HEK293 (cell line): ENCODE measurements at regions of chr7 and their contacts with region 1.

Region 1: DNA sequence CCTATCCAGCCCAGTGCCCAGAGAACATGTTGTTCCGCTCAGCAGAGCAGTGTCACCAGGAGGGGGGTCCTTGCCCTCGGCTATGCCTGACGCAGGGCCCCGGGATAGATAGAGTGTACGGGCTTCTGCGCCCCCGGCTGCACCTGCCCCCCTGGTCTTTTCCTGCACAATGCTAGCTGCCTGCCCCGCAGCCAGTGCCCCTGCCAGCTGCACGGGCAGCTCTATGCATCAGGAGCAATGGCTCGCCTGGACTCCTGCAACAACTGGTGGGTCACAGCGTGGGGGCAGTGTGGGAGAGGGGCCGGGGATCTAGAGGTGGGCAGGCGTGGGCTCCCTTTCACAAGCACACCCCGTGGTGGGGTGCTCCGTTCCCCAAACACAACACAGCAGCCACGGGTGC is 31.4 kb upstream of the ZNF862 start:
- H3K4me3 ChIP-seq: no peak overlapping the region
- H3K27ac ChIP-seq: no peak overlapping the region
- H3K4me1 ChIP-seq: no peaks in the 10 kb centered on the region
- CTCF ChIP-seq: no peak

Region 2: DNA sequence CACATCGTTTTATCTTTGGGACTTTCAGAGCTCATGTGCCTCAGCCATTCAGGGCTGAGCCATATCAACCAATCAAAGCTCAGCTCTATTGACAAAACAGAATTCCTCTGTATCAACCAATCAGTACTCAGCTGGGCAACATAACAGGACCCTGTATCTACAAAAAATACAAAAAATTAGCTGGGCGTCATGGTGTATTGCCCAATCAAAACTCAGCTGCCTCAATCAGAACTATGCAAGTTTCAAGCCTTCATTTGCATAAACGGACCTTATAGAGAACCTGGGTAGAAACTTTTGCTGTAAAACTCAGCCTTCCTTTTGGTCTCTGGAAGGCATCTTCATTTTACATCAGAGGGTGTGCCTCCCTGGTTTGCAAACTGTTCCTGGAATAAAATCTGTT is 110.4 kb before region 1 on chr7:
- CTCF ChIA-PET with region 1: no interaction called
- POLR2A ChIA-PET with region 1: no interaction called
- H3K4me3 ChIP-seq: no peak overlapping the region
- H3K27ac ChIP-seq: no peak overlapping the region
- H3K4me1 ChIP-seq: no peaks in the 10 kb centered on the region
- CTCF ChIP-seq: no peak

Region 3: DNA sequence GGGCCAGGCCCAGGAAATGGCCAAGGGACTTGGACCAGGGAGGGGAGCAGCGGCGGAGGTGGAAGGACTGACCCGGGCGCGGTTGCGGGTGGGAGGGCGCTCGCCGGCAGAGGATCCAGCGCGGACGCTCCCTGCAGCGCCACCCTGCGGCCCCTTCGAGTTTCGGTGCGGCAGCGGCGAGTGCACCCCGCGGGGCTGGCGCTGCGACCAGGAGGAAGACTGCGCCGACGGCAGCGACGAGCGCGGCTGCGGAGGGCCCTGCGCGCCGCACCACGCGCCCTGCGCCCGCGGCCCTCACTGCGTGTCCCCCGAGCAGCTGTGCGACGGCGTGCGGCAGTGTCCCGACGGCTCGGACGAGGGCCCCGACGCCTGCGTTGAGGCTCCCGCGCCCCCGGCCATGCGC is 16.6 kb before region 1 on chr7:
- CTCF ChIA-PET with region 1: interaction called, 13 read pairs
- POLR2A ChIA-PET with region 1: no interaction called
- H3K4me3 ChIP-seq: no peak overlapping the region
- H3K27ac ChIP-seq: no peak overlapping the region
- H3K4me1 ChIP-seq: no peaks in the 10 kb centered on the region
- CTCF ChIP-seq: no peak

Region 4: DNA sequence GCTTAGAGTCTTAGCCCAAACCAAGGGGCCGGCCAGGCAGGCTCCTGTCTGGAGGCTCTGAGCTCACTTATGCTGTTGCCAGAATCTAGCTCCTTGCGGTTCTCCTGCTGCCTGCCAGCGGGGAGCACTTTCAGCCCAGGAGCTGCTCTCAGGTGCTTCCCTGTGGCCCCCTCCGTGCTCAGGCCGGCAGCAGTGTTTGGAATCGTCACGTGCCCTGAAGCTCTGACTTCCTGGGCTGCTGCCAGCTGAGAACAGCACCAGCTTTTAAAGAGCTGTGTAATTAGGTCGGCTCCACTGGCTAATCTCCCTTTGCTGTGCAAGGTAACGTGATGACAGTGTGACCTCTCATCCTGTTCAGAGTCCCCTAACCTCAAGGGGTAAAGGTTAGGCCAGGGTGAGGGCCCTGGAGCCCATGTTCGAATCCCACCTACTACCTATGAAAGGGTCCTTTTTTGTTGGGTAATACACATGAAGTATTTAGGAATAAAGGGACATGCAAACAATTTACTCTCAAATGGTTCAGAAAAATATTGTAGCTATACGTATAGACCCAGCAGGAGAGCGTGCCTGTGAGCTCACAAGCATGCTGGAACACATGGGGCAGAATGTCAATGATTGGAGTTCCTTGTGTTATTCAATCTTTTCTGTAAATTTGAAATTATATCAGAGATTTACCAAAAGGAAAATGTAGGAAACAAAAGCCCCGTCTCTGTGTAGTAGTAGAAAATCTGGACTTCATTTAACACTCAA is 48.1 kb after region 1 on chr7:
- CTCF ChIA-PET with region 1: interaction called, 21 read pairs
- POLR2A ChIA-PET with region 1: no interaction called
- H3K4me3 ChIP-seq: no peak overlapping the region
- H3K27ac ChIP-seq: no peak overlapping the region
- H3K4me1 ChIP-seq: peaks cover 12% of the 10 kb centered on the region
- CTCF ChIP-seq: no peak

Region 5: DNA sequence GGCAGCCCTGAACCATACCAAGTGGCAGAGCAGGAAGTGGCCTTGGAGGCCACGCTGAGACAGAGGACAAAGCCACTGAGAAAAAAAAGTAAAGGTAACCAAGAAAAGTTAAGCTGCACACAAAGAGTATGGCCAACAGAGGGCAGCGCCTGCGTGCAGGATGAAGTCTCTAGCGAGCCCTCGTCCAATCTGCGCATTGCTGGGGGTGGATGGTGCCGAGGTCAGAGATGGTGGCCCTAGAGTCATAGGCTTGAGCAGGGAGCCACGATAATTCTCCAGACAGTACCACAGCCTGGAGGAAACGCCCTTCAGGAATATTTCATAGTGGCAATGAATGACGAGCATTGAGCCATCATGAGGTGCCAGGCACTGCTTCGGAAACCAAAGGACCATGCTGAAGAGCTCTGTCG is 76.7 kb after region 1 on chr7:
- CTCF ChIA-PET with region 1: interaction called, 14 read pairs
- POLR2A ChIA-PET with region 1: no interaction called
- H3K4me3 ChIP-seq: no peak overlapping the region
- H3K27ac ChIP-seq: no peak overlapping the region
- H3K4me1 ChIP-seq: no peaks in the 10 kb centered on the region
- CTCF ChIP-seq: peak; percentile 88